ENCODE measurements at regions of chr1 and their contacts with region 1.

Region 1: DNA sequence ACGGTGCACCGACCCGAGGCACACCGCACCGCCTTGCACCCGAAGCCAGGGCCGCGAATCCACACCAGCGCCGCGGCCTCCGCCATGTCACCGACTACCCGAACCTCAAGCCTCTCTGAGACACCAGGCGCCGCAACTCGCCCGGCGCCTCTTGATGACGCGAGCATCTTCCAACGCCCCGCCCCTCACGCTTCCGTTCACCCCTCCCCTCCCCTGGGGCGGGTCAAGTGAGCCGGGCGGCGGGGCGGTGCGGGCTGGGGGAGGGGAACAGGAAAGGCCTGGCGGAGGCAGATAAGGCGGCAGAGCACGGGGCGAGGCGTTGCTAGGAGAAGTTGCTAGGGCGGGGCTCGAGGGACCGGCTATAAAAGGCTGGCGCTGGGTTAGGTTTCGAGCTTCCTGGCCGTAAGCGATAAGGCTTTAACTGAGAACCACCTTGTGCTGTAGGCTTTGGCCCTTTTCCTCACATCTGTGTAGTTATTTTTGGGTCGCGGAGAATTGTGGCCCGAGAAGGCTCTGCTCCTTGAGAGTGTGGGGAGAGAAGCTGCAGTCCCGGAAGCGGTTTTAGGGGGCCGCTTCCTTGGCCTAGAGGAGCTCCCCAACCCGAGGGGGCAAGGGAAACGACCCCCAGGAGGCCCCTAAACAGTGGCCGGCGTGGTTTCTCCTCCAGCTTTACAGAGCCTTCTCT is at the start of gene SDE2:
- DNase-seq: peak; percentile 98 to 100 (median 98)
- ATAC-seq: peak; percentile 63
- H3K4me3 ChIP-seq: peak within 1 kb of the TSS; percentile 78
- H3K27ac ChIP-seq: peak within 1 kb of the TSS; percentile 98
- H3K4me1 ChIP-seq: peaks cover 36 to 68% of the 10 kb centered on the region in 2 experiments
- H3K27me3 ChIP-seq: no peaks in the 10 kb centered on the region
- CTCF ChIP-seq: 0 out of 6 replicates have a peak, but pooled peaks of 1 of the 3 experiments have one; percentile 1
- EP300 ChIP-seq: peak; percentile 96
- POLR2A ChIP-seq: peak; percentile 99
- RAD21 ChIP-seq: peak in 1 of 2 experiments; percentile 31
- polyA plus RNA-seq, gene SDE2: 14.3 to 19.3 TPM

Region 2: DNA sequence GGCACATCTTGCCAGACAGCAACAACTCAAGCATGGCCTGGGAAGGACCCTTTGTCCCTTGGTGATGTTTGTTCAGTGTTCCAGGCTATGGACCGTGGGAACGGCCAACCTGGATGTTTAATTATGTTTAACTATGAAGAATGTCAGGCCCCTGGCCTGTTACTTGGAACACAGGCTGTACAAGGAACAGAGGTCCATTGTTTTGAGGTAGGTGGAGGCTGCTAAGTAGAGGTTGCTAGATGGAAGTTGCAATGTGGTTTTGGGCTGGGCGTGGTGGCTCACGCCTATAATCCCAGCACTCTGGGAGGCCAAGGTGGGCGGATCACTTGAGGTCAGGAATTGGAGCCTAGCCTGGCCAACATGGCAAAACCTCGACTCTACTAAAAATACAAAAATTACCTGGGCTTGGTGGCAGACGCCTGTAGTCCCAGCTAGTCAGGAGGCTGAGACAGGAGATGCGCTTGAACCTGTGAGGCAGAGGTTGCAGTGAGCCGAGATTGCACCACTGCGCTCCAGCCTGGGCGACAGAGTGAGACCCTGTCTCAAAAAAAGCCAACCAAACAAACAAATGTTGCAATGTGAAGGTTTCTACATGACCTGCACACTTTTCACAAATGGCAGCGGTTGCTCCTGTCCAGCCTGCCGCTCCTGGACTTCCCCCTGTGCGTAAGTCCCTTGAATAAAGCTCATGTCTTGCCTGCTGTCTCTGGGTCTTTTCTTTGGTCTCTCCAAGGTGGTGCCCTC is 108.0 kb before region 1 on chr1:
- CTCF ChIA-PET with region 1: no interaction called
- POLR2A ChIA-PET with region 1: no interaction called
- in situ Hi-C with region 1: no loop called
- intact Hi-C with region 1: no loop called
- DNase-seq: peak in 1 of 4 experiments; percentile 13
- ATAC-seq: peak; percentile 19; the same call in 2 of the 3 replicates
- H3K4me3 ChIP-seq: no peak overlapping the region
- H3K27ac ChIP-seq: no peak overlapping the region
- H3K4me1 ChIP-seq: peaks cover 0 to 27% of the 10 kb centered on the region in 2 experiments; a peak in 3 of 5 replicates
- H3K27me3 ChIP-seq: no peaks in the 10 kb centered on the region
- CTCF ChIP-seq: no peak
- EP300 ChIP-seq: no peak
- POLR2A ChIP-seq: no peak
- RAD21 ChIP-seq: no peak

Region 3: GRCh38 chr1:225923692-225924555 is 75.4 kb before region 1 on chr1 and contains the start of gene PYCR2:
- CTCF ChIA-PET with region 1: no interaction called
- POLR2A ChIA-PET with region 1: interaction called, 14 read pairs
- in situ Hi-C with region 1: no loop called
- intact Hi-C with region 1: loop called (anchors 2 kb)
- DNase-seq: peak; percentile 99 to 100 (median 99)
- ATAC-seq: peak; percentile 91
- H3K4me3 ChIP-seq: peak within 1 kb of the TSS; percentile 94
- H3K27ac ChIP-seq: peak within 1 kb of the TSS; percentile 93
- H3K4me1 ChIP-seq: peaks cover 44 to 69% of the 10 kb centered on the region in 2 experiments
- H3K27me3 ChIP-seq: no peaks in the 10 kb centered on the region
- CTCF ChIP-seq: peak; percentile 5 to 19 (median 10); a peak in 2 of 6 replicates
- EP300 ChIP-seq: peak; percentile 41
- POLR2A ChIP-seq: peak; percentile 97
- RAD21 ChIP-seq: peak in 1 of 2 experiments; percentile 16; a peak in 2 of 4 replicates
- polyA plus RNA-seq, gene PYCR2: 5.5 to 7.9 TPM

Region 4: DNA sequence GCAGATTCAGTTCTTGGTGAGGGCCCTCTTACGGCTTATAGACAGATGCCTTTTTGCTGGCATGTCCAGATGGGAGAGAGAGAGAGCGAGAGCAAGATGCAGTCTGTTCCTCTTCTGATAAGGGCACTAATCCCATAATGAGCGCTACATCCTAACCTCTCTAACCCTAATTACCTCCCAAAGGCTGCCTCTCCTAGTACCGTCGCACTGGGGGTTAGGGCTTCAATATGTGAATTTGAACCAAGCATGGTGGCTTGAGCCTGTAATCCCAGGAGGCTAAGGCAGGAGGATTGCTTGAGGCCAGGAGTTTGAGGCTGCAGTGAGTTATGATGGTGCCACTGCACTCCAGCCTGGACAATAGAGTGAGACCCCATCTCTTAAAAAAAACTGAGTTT is 10.3 kb after region 1 on chr1:
- CTCF ChIA-PET with region 1: no interaction called
- POLR2A ChIA-PET with region 1: interaction called, 26 read pairs
- in situ Hi-C with region 1: no loop called
- intact Hi-C with region 1: no loop called
- DNase-seq: peak; percentile 54 to 81 (median 66)
- ATAC-seq: peak; percentile 75
- H3K4me3 ChIP-seq: no peak overlapping the region
- H3K27ac ChIP-seq: no peak overlapping the region
- H3K4me1 ChIP-seq: peaks cover 24 to 38% of the 10 kb centered on the region in 2 experiments; a peak in 4 of 5 replicates
- H3K27me3 ChIP-seq: no peaks in the 10 kb centered on the region
- CTCF ChIP-seq: no peak
- EP300 ChIP-seq: peak; percentile 70
- POLR2A ChIP-seq: no peak
- RAD21 ChIP-seq: peak in 1 of 2 experiments; percentile 31; a peak in 1 of 4 replicates

Region 5: GRCh38 chr1:226034482-226034881 is 35.1 kb after region 1 on chr1:
- CTCF ChIA-PET with region 1: no interaction called
- POLR2A ChIA-PET with region 1: interaction called, 6 read pairs
- in situ Hi-C with region 1: no loop called
- intact Hi-C with region 1: loop called (anchors 5 kb)
- DNase-seq: peak in 2 of 4 experiments; percentile 45 to 55
- ATAC-seq: peak; percentile 71
- H3K4me3 ChIP-seq: no peak overlapping the region
- H3K27ac ChIP-seq: peak overlapping the region; percentile 55; the same call in 2 of the 3 replicates
- H3K4me1 ChIP-seq: peaks cover 4 to 13% of the 10 kb centered on the region in 2 experiments
- H3K27me3 ChIP-seq: no peaks in the 10 kb centered on the region
- CTCF ChIP-seq: no peak
- EP300 ChIP-seq: no peak
- POLR2A ChIP-seq: no peak
- RAD21 ChIP-seq: 0 out of 4 replicates have a peak, but pooled peaks of 1 of the 2 experiments have one; percentile 17

Region 6: GRCh38 chr1:226109829-226110248 is 110.5 kb after region 1 on chr1:
- CTCF ChIA-PET with region 1: no interaction called
- POLR2A ChIA-PET with region 1: interaction called, 10 read pairs
- in situ Hi-C with region 1: no loop called
- intact Hi-C with region 1: loop called (anchors 1 kb)
- DNase-seq: peak; percentile 93 to 99 (median 97)
- ATAC-seq: peak; percentile 77
- H3K4me3 ChIP-seq: peak overlapping the region; percentile 57
- H3K27ac ChIP-seq: peak overlapping the region; percentile 85
- H3K4me1 ChIP-seq: peaks cover 42 to 47% of the 10 kb centered on the region in 2 experiments
- H3K27me3 ChIP-seq: no peaks in the 10 kb centered on the region
- CTCF ChIP-seq: peak in 2 of 3 experiments; percentile 20 to 34; a peak in 3 of 6 replicates
- EP300 ChIP-seq: no peak
- POLR2A ChIP-seq: no peak
- RAD21 ChIP-seq: peak in 1 of 2 experiments; percentile 24; a peak in 1 of 4 replicates

Measured in K562 (cell line).